ENCODE measurements at regions of chr9 and their contacts with region 1.

Region 1: GRCh38 chr9:26326473-26327044 is 566.0 kb downstream of the CAAP1 start:
- DNase-seq: peak; percentile 50
- H3K4me3 ChIP-seq: no peak overlapping the region
- CTCF ChIP-seq: peak; percentile 61

Region 2: DNA sequence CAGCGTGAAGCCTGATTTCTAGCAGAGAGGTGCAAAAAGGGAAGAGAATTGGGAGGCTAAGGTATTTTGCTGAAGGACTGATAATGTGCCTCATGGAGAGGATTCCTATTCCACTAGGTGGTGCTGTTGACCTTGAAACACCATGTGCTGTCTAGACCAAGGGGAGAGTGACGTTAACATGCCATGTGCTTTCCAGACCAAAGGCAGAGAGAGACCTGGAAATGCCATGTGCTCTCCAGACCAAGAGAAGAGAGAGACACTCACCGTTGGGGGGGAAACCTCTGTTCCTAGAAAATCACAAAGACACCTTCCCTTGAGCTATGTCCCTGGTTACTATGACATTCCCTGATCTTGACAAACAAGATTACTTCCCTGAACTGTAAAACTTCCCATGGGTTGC is 362.3 kb before region 1 on chr9:
- CTCF ChIA-PET with region 1: interaction called, 41 read pairs
- POLR2A ChIA-PET with region 1: no interaction called
- DNase-seq: peak; percentile 53
- H3K4me3 ChIP-seq: no peak overlapping the region
- CTCF ChIP-seq: peak; percentile 51

Region 3: GRCh38 chr9:26313108-26313507 is 13.5 kb before region 1 on chr9:
- CTCF ChIA-PET with region 1: interaction called, 25 read pairs
- POLR2A ChIA-PET with region 1: no interaction called
- DNase-seq: no peak
- H3K4me3 ChIP-seq: no peak overlapping the region
- CTCF ChIP-seq: no peak

Measured in AG04449 (cell line).